ENCODE measurements at regions of chr12 and their contacts with region 1.

Region 1: GRCh38 chr12:55724226-55724939 is 4.2 kb downstream of the RDH5 start:
- DNase-seq: peak; percentile 79
- H3K4me3 ChIP-seq: no peak overlapping the region
- H3K27ac ChIP-seq: no peak overlapping the region
- H3K4me1 ChIP-seq: peaks cover 25% of the 10 kb centered on the region
- H3K27me3 ChIP-seq: no peaks in the 10 kb centered on the region
- CTCF ChIP-seq: peak; percentile 54

Region 2: GRCh38 chr12:55499810-55500252 is 224.6 kb before region 1 on chr12:
- intact Hi-C with region 1: no loop called
- DNase-seq: peak; percentile 34
- H3K4me3 ChIP-seq: no peak overlapping the region
- H3K27ac ChIP-seq: no peak overlapping the region
- H3K4me1 ChIP-seq: no peaks in the 10 kb centered on the region
- H3K27me3 ChIP-seq: no peaks in the 10 kb centered on the region
- CTCF ChIP-seq: no peak

Region 3: DNA sequence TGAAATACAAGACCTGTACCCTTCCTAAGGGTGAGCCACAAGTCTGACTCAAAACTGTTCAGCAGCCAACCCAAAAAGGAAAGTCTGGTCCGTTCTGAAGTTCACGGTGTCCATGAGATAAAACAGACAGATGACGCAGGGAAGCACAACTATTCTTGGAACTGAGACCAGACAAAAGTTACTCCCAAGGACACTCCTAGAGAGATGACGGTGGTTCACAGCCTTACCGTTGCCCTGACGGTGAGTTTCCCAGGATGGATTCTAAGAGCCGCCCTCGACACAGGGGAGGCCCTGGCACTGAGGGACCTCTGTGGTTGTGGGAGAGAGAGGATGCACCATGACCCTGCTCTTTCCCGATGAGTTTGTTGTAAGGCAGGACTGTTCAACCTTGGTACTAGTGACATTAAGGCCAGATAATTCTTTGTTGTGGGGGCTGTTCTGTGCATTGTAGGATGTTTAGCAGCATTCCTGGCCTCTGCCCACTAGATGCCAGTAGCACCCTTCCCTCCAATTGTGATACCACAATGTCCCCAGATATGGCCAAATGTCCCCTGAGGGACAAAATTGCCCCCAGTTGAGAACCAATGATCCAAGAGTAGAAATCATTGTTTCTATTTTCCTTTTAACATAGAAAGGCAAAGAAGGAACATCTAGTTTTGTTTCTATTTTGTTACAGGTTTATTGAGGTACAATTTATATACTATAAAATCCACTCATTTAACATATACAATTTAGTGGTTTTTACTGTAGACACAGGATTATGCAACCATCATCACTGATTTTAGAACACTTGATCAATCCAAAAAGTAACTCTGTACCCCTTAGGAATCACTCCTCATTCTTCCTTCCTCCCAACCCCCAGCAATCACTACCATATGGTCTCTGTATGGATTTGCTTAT is 64.6 kb before region 1 on chr12:
- intact Hi-C with region 1: loop called (anchors 5 kb)
- DNase-seq: no peak
- H3K4me3 ChIP-seq: no peak overlapping the region
- H3K27ac ChIP-seq: no peak overlapping the region
- H3K4me1 ChIP-seq: no peaks in the 10 kb centered on the region
- H3K27me3 ChIP-seq: no peaks in the 10 kb centered on the region
- CTCF ChIP-seq: no peak

Region 4: DNA sequence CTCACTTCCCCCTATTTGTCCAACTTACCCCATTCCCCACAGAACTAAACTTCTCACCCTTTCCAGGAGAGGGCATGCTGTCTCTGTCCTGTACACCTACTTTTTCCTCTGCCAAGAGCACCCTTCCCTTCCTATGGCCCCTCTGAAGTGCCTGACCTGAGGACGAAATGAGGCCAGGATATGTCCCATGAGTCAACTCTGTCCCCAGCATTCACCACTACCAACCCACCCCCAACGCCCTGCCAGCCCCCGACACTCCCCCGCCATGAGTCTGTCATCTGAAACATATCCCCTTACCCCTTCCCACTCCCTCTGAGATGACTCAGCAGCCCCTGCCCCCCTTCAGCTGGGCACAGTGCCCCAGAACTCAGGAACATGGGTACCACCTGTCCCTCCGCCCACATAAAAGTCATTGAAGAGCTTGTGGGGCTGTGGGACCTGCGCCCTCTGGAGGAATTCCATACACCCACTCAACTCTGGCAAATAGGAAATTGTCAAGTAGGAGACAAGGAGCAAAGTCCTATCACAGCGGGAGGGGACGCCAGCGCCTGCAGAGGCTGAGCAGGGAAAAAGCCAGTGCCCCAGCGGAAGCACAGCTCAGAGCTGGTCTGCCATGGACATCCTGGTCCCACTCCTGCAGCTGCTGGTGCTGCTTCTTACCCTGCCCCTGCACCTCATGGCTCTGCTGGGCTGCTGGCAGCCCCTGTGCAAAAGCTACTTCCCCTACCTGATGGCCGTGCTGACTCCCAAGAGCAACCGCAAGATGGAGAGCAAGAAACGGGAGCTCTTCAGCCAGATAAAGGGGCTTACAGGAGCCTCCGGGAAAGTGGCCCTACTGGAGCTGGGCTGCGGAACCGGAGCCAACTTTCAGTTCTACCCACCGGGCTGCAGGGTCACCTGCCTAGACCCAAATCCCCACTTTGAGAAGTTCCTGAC is 43.0 kb before region 1 on chr12:
- intact Hi-C with region 1: loop called (anchors 5 kb)
- DNase-seq: peak; percentile 90
- H3K4me3 ChIP-seq: peak overlapping the region; percentile 46
- H3K27ac ChIP-seq: no peak overlapping the region
- H3K4me1 ChIP-seq: peaks cover 4% of the 10 kb centered on the region
- H3K27me3 ChIP-seq: no peaks in the 10 kb centered on the region
- CTCF ChIP-seq: peak; percentile 49

Measured in colonic mucosa (tissue), 4 donors.